IMR-90 (cell line): ENCODE measurements at regions of chr4 and their contacts with region 1.

Region 1: DNA sequence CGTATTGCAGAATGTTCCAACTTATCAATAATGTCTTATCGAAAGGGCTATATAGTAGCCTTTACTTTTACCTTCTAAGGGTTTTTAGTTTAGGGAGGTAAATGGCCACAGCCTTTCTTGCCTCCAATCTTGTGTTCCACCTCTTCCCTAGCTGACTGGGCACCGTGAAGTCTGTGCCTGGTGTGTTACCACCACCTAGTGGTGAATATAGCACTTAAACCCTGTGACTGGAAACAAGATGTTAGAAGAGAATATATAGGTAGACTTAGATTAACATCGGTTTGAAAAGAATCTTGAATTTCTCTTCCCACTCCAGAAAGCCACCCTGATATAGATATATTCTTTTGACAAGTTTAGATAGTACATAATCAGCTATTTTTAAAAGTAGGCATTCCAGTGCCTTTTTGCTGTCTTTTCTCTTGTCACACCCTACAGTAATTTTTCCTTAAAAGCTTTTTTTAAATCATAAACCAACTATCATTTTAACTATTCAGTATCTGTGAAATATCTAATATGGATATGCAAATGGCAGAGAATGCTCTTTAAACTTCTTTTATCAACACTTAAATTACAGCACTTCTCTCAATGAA is 27.8 kb upstream of the ADH7 start:
- DNase-seq: peak; percentile 72
- ATAC-seq: peak; percentile 98
- H3K4me3 ChIP-seq: no peak overlapping the region
- H3K27ac ChIP-seq: no peak overlapping the region
- H3K4me1 ChIP-seq: no peaks in the 10 kb centered on the region
- H3K27me3 ChIP-seq: 0 out of 2 replicates have a peak, but pooled peaks cover 1% of the 10 kb centered on the region
- CTCF ChIP-seq: peak; percentile 92
- POLR2A ChIP-seq: no peak
- RAD21 ChIP-seq: peak; percentile 98

Region 2: DNA sequence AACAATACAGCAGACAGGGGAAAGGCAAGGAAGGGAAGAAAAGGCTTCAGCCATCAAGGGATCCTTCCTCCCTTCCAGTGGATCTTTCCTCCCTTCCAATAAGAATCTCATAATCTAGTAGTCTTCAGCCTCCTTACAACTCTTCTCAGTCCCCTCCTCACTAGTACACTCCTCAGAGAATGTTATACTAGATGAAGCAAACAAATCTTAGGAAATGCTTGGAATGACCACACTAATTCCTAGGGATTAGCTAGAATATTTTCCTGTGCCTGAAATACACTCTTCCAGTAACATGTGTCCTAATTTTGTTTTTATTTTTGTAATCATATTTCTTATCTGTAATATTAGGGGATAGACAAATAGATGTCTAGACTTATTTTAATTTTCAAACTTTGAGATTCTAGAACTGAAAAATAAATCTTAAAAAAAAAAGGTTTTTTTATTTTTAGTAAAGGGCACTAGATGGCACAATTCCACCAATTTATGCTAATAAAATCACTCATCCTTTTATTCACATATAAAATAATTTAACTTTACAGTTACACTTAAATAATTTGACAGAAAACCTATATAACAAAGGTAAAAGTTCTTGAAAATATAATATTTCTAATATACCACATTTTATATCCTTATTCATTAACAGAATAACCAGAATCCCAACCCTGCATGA is 1312.7 kb before region 1 on chr4:
- CTCF ChIA-PET with region 1: no interaction called
- POLR2A ChIA-PET with region 1: no interaction called
- dilution Hi-C with region 1: no loop called
- in situ Hi-C with region 1: no loop called
- intact Hi-C with region 1: loop called (anchors 5 kb)
- DNase-seq: peak; percentile 16
- ATAC-seq: peak; percentile 59
- H3K4me3 ChIP-seq: no peak overlapping the region
- H3K27ac ChIP-seq: peak overlapping the region; percentile 29; the same call in 1 of the 2 replicates
- H3K4me1 ChIP-seq: peaks cover 2% of the 10 kb centered on the region; the same call in 1 of the 2 replicates
- H3K27me3 ChIP-seq: no peaks in the 10 kb centered on the region
- CTCF ChIP-seq: peak; percentile 45
- POLR2A ChIP-seq: no peak
- RAD21 ChIP-seq: peak; percentile 50

Region 3: GRCh38 chr4:98939892-98940298 is 523.1 kb before region 1 on chr4:
- CTCF ChIA-PET with region 1: no interaction called
- POLR2A ChIA-PET with region 1: no interaction called
- dilution Hi-C with region 1: no loop called
- in situ Hi-C with region 1: no loop called
- intact Hi-C with region 1: loop called (anchors 1 kb)
- DNase-seq: peak; percentile 80
- ATAC-seq: peak; percentile 80
- H3K4me3 ChIP-seq: no peak overlapping the region
- H3K27ac ChIP-seq: no peak overlapping the region
- H3K4me1 ChIP-seq: peaks cover 2% of the 10 kb centered on the region; the same call in 1 of the 2 replicates
- H3K27me3 ChIP-seq: no peaks in the 10 kb centered on the region
- CTCF ChIP-seq: peak; percentile 76
- POLR2A ChIP-seq: no peak
- RAD21 ChIP-seq: peak; percentile 61

Region 4: DNA sequence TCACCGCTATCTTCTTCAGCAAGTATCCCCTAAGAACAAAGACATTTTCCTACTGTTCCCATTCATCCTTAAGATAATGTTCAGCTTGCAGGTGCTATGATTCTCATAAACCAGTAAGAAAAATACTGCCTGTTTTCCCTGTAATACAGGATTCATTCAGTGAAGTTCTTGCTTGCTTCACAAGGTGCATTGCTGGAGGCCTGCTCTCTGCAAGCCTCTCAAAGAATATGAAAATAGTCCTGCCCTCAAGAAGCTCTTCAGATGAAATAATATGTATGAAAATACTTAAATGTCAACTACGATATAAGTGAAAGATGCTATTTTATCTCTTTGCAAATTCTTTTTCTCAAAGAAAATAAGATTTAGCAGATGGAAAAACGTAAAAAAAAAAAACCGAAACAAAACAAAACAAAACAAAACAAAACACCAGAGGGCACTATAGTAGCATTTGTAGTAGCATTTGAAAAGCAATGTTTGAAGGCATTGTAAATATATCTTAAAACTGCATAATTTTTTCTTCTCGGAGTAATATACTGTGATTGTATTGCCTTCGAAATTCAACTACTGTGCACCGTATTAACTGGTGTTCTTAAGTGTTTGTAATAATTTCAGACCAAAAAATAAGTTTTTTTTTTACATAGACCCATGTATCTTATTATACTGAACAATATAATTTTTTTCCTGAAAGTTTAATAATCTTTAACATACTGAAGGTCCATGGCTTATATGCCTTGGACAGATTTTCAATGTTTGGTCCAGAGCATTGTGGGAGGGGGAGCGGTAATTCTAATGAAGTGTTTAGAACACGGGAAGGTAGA is 344.9 kb before region 1 on chr4:
- CTCF ChIA-PET with region 1: interaction called, 4 read pairs
- POLR2A ChIA-PET with region 1: no interaction called
- dilution Hi-C with region 1: no loop called
- in situ Hi-C with region 1: no loop called
- intact Hi-C with region 1: loop called (anchors 1 kb)
- DNase-seq: peak; percentile 35
- ATAC-seq: peak; percentile 37; the same call in 1 of the 2 replicates
- H3K4me3 ChIP-seq: no peak overlapping the region
- H3K27ac ChIP-seq: no peak overlapping the region; the same call in 1 of the 2 replicates
- H3K4me1 ChIP-seq: no peaks in the 10 kb centered on the region
- H3K27me3 ChIP-seq: no peaks in the 10 kb centered on the region
- CTCF ChIP-seq: peak; percentile 54
- POLR2A ChIP-seq: no peak
- RAD21 ChIP-seq: peak; percentile 54

Region 5: GRCh38 chr4:99201690-99202089 is 261.3 kb before region 1 on chr4:
- CTCF ChIA-PET with region 1: interaction called, 9 read pairs
- POLR2A ChIA-PET with region 1: no interaction called
- dilution Hi-C with region 1: no loop called
- in situ Hi-C with region 1: no loop called
- intact Hi-C with region 1: loop called (anchors 2 kb)
- DNase-seq: peak; percentile 55
- ATAC-seq: peak; percentile 68
- H3K4me3 ChIP-seq: no peak overlapping the region
- H3K27ac ChIP-seq: peak overlapping the region; percentile 23; the same call in 1 of the 2 replicates
- H3K4me1 ChIP-seq: peaks cover 12% of the 10 kb centered on the region
- H3K27me3 ChIP-seq: no peaks in the 10 kb centered on the region
- CTCF ChIP-seq: peak; percentile 59
- POLR2A ChIP-seq: no peak
- RAD21 ChIP-seq: peak; percentile 54

Region 6: GRCh38 chr4:99414389-99414788 is 48.6 kb before region 1 on chr4:
- CTCF ChIA-PET with region 1: no interaction called
- POLR2A ChIA-PET with region 1: no interaction called
- dilution Hi-C with region 1: no loop called
- in situ Hi-C with region 1: no loop called
- intact Hi-C with region 1: loop called (anchors 1 kb)
- DNase-seq: no peak
- ATAC-seq: no peak; the same call in 1 of the 2 replicates
- H3K4me3 ChIP-seq: no peak overlapping the region
- H3K27ac ChIP-seq: no peak overlapping the region
- H3K4me1 ChIP-seq: no peaks in the 10 kb centered on the region
- H3K27me3 ChIP-seq: no peaks in the 10 kb centered on the region
- CTCF ChIP-seq: no peak
- POLR2A ChIP-seq: no peak
- RAD21 ChIP-seq: no peak

Region 7: DNA sequence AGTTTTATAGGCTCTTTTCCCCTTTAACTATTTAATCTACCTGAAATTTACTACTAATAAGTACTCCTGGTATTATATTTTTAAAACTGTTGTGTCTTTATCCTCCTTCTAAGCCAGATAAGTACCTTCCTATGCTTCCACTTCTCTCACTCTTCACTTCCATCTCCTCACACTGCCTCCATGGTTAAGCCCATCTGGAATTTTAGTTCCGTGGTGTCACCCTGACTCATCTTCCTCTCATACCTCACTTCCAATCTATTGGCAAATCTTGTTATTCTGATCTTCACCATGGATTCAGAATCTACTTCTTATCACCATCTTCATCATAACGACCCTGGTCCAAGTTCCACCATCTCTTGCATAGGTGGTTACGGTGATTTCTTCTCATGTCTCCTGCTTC is 321.0 kb after region 1 on chr4:
- CTCF ChIA-PET with region 1: no interaction called
- POLR2A ChIA-PET with region 1: no interaction called
- dilution Hi-C with region 1: no loop called
- in situ Hi-C with region 1: no loop called
- intact Hi-C with region 1: no loop called
- DNase-seq: no peak
- ATAC-seq: no peak
- H3K4me3 ChIP-seq: no peak overlapping the region
- H3K27ac ChIP-seq: no peak overlapping the region
- H3K4me1 ChIP-seq: no peaks in the 10 kb centered on the region
- H3K27me3 ChIP-seq: no peaks in the 10 kb centered on the region; the same call in 1 of the 2 replicates
- CTCF ChIP-seq: no peak
- POLR2A ChIP-seq: no peak
- RAD21 ChIP-seq: no peak